Heart right ventricle (tissue), 16 donors: ENCODE measurements at regions of chr4 and their contacts with region 1.

Region 1: DNA sequence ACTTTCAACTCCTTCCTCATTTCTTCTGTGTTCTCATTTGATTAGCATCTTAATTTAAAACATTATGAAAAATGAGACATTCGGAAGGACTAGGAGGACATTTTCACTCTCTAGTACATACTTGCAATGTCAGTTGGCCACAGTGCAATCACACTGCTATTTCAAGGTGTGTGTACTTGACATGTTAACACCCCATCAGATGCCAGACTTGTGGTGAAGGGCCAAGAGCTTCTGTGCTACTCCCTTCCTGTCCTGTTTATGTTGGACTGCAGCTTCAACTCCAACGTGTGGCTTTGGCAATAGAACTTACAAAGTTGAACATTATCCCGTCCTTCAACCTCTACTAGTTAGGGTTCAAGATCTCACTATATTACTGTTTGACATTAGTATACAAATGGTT is 221.0 kb downstream of the PALLD start:
- DNase-seq: peak in 1 of 2 donors; percentile 42
- ATAC-seq: peak; percentile 70 to 93 (median 86)
- H3K4me3 ChIP-seq: no peak overlapping the region
- H3K27ac ChIP-seq: peak overlapping the region in 9 of 10 donors; percentile 7 to 79 (median 61)
- H3K4me1 ChIP-seq: peaks cover 0 to 45% (median 31%) of the 10 kb centered on the region in 9 donors
- H3K27me3 ChIP-seq: no peaks in the 10 kb centered on the region
- CTCF ChIP-seq: no peak

Region 2: DNA sequence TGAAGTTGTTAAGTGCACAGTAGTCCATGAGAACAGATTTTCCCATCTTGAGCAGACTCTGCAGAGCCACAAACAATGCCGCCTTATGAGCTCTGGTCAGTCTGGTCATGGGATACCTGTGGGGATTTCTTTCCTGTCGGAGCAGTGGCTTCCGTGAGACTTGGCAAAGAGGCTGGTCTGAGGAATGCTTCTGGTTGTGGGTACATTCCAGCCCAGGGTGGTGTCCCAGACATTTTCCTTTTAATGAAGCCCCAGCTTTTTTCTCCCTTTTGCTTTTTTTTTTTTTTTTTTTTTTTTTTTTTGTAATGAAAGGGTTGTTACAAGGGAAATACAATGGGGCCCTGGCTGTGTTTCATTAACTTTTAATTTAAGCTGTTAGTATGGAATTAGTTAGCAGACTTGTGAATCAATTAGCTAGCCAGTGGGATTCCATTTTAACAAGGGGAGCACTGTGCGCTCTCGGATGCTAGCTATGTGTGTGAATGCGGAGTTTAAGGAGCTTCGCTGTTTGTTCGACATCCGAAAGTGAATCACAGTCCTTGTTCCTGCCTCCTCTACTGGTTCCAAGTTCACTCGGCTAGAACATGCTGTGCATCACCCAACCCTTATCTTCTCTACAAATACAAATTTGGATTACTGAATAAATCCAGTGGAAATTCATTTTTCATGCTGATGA is 67.1 kb after region 1 on chr4:
- intact Hi-C with region 1: loop called in 1 of 10 experiments (anchors 5 kb)
- DNase-seq: no peak
- ATAC-seq: peak in 6 of 8 donors; percentile 32 to 83 (median 48)
- H3K4me3 ChIP-seq: no peak overlapping the region
- H3K27ac ChIP-seq: peak overlapping the region in 4 of 10 donors; percentile 24 to 63 (median 50)
- H3K4me1 ChIP-seq: peaks cover 0 to 35% (median 15%) of the 10 kb centered on the region in 9 donors
- H3K27me3 ChIP-seq: no peaks in the 10 kb centered on the region
- CTCF ChIP-seq: no peak

Region 3: GRCh38 chr4:168815379-168816345 is 97.8 kb after region 1 on chr4:
- intact Hi-C with region 1: loop called in 1 of 10 experiments (anchors 5 kb)
- DNase-seq: no peak
- ATAC-seq: peak in 1 of 8 donors; percentile 36
- H3K4me3 ChIP-seq: no peak overlapping the region
- H3K27ac ChIP-seq: peak overlapping the region; percentile 2 to 87 (median 78)
- H3K4me1 ChIP-seq: peaks cover 0 to 64% (median 34%) of the 10 kb centered on the region in 9 donors
- H3K27me3 ChIP-seq: no peaks in the 10 kb centered on the region
- CTCF ChIP-seq: no peak

Region 4: DNA sequence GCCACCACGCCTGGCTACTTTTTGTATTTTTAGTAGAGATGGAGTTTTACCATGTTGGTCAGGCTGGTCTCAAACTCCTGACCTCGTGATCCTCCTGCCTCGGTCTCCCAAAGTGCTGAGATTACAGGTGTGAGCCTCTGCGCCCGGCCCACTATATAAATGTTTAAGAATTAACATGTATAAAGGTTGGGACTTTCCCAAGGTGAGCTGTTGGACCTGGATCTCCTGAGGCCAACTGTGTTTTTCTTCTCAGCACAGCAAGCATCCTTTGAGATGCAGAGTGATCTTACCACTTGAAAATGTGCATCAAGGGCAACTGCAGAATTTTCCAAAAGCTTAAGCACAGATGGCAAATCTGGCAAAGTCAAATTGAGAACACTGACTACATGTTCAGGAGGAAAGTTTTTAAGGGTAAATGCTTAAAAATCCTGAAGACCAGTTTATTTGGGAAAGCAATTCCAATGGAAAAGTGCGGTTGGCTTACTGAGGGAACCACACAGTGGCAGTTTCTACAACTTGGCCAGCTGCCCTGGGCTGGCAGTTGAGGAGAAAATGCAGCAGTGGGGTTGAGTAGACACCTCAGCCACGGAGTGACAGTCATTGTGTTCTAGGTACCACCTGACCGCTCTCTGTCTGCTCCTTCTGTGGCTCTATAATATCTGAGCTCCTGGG is 123.3 kb after region 1 on chr4:
- intact Hi-C with region 1: loop called in 3 of 10 experiments (anchors 2 to 10 kb)
- DNase-seq: peak; percentile 44 to 53
- ATAC-seq: peak in 7 of 8 donors; percentile 24 to 69 (median 49)
- H3K4me3 ChIP-seq: no peak overlapping the region
- H3K27ac ChIP-seq: peak overlapping the region; percentile 8 to 95 (median 75)
- H3K4me1 ChIP-seq: peaks cover 19 to 100% (median 64%) of the 10 kb centered on the region in 9 donors
- H3K27me3 ChIP-seq: no peaks in the 10 kb centered on the region
- CTCF ChIP-seq: no peak

Region 5: GRCh38 chr4:168907119-168907698 is 189.4 kb after region 1 on chr4:
- intact Hi-C with region 1: loop called in 3 of 10 experiments (anchors 5 kb)
- DNase-seq: no peak
- ATAC-seq: peak in 7 of 8 donors; percentile 38 to 79 (median 58)
- H3K4me3 ChIP-seq: no peak overlapping the region
- H3K27ac ChIP-seq: peak overlapping the region in 6 of 10 donors; percentile 8 to 75 (median 38)
- H3K4me1 ChIP-seq: peaks cover 0 to 40% (median 31%) of the 10 kb centered on the region in 9 donors
- H3K27me3 ChIP-seq: no peaks in the 10 kb centered on the region
- CTCF ChIP-seq: no peak

Region 6: GRCh38 chr4:169099771-169100180 is 381.9 kb after region 1 on chr4:
- intact Hi-C with region 1: no loop called
- DNase-seq: peak in 1 of 2 donors; percentile 69
- ATAC-seq: peak in 7 of 8 donors; percentile 48 to 90 (median 81)
- H3K4me3 ChIP-seq: no peak overlapping the region
- H3K27ac ChIP-seq: peak overlapping the region in 9 of 10 donors; percentile 9 to 81 (median 72)
- H3K4me1 ChIP-seq: peaks cover 0 to 39% (median 24%) of the 10 kb centered on the region in 9 donors
- H3K27me3 ChIP-seq: no peaks in the 10 kb centered on the region
- CTCF ChIP-seq: no peak